CD4-positive, alpha-beta T cell (primary cell): ENCODE measurements at regions of chr17 and their contacts with region 1.

Region 1: DNA sequence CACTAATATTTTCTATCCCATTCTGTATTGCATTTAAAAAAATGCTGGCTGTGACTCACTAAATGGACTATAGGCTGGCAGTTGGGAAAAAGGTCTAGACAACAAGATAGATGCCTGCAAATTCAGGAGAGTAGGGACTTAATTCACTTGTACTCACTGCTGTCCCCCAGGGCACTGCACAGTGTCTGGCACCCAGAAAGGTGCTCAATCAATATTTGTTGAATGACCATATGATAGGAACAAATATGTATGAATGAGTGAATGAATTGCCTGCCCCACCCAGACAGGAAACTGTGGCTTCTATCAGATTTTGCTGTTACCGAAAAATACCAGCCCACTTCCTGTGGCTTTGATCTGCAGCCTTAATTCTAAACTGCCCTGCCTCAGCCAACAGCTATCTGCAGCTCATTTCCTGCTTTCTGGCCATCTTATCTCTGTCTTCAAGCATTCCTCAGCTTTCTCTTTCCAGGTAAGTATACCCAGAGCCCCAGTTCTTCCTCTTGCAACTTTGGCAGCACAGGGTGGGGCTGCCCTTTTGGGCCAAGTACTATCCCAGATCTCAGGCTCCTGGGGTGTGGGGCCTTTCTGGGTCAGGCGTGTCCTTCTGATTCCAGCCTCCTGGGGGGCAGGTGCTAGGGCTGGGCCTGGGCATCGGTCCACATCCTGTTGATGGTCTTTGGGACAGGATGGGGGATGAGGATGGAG is 15.3 kb upstream of the TNS4 start:
- DNase-seq: peak in 13 of 14 experiments; percentile 40 to 94 (median 64)
- ATAC-seq: peak; percentile 72
- H3K4me3 ChIP-seq: peak overlapping the region; percentile 51
- H3K4me3 Mint-ChIP-seq: peak overlapping the region; percentile 83
- H3K27ac ChIP-seq: no peak overlapping the region
- H3K27ac Mint-ChIP-seq: peak overlapping the region; percentile 86
- H3K4me1 ChIP-seq: peaks cover 79% of the 10 kb centered on the region
- H3K4me1 Mint-ChIP-seq: peaks cover 57% of the 10 kb centered on the region
- H3K27me3 ChIP-seq: no peaks in the 10 kb centered on the region
- H3K27me3 Mint-ChIP-seq: no peaks in the 10 kb centered on the region
- CTCF ChIP-seq: no peak

Region 2: GRCh38 chr17:40427002-40427491 is 89.7 kb before region 1 on chr17:
- CTCF ChIA-PET with region 1: no interaction called
- POLR2A ChIA-PET with region 1: interaction called, 10 read pairs
- intact Hi-C with region 1: no loop called
- DNase-seq: peak in 5 of 14 experiments; percentile 23 to 47 (median 46)
- ATAC-seq: peak; percentile 95
- H3K4me3 ChIP-seq: no peak overlapping the region
- H3K4me3 Mint-ChIP-seq: peak overlapping the region; percentile 66
- H3K27ac ChIP-seq: peak overlapping the region in 1 of 2 donors; percentile 7
- H3K27ac Mint-ChIP-seq: peak overlapping the region; percentile 51
- H3K4me1 ChIP-seq: peaks cover 33% of the 10 kb centered on the region
- H3K4me1 Mint-ChIP-seq: peaks cover 29% of the 10 kb centered on the region
- H3K27me3 ChIP-seq: no peaks in the 10 kb centered on the region
- H3K27me3 Mint-ChIP-seq: no peaks in the 10 kb centered on the region
- CTCF ChIP-seq: no peak

Region 3: DNA sequence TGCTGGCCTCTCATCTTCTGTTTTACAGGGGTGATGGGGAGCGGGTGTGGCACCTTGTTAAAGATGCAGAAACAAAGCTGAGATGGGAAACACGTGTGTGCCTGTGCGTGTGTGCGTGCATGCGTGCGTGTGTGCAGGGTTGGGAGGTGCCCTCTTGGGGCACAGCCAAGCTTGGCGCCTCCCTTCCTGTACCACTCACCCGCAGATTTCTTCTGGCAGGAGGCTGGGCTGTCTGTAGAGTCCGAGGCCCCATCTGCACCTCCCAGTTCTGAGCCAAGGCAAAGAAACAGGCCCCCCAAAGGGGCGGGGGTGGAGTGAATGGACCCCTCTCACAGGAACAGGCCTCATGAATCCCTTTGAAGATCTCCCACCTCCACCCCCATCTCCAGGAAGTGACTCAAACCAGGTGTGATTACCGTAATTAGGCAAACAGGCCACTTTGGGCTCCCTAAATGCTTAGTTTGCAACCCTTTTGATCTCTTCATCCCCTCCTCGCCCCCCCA is 36.2 kb before region 1 on chr17:
- CTCF ChIA-PET with region 1: no interaction called
- POLR2A ChIA-PET with region 1: interaction called, 21 read pairs
- intact Hi-C with region 1: loop called (anchors 1 to 2 kb)
- DNase-seq: peak; percentile 71 to 96 (median 83)
- ATAC-seq: peak; percentile 87
- H3K4me3 ChIP-seq: no peak overlapping the region
- H3K4me3 Mint-ChIP-seq: peak overlapping the region; percentile 68
- H3K27ac ChIP-seq: peak overlapping the region; percentile 57 to 71
- H3K27ac Mint-ChIP-seq: peak overlapping the region; percentile 97
- H3K4me1 ChIP-seq: peaks cover 80% of the 10 kb centered on the region
- H3K4me1 Mint-ChIP-seq: peaks cover 67% of the 10 kb centered on the region
- H3K27me3 ChIP-seq: no peaks in the 10 kb centered on the region
- H3K27me3 Mint-ChIP-seq: no peaks in the 10 kb centered on the region
- CTCF ChIP-seq: no peak

Region 4: DNA sequence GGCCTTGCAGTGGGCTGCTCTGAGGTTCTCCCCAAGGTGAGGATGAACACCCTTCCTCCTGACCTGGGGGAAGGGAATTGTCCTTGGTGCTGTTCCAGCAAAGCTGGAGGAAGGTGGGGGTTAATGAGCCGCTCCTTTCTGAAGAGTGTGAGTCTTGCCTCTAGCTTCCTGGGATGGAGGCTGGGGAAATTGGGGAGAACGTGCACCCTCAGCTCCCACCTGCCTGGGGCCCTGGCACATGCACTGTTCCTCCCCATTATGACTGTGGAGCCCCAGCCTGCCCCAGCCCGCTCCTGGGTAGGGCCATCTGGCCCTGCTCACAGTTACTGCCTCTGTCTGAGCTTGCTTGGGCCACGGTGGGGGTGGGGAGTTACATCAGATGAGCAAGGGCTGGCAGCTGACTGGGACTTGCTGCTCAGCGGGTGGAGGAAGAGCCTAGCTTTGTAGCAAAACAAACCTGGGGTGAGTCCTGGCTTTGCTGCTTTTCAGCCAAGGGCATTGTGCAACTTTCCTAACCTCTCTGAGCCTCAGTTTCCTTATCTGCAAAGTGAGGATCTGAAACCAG is 26.4 kb before region 1 on chr17:
- CTCF ChIA-PET with region 1: no interaction called
- POLR2A ChIA-PET with region 1: interaction called, 10 read pairs
- intact Hi-C with region 1: loop called in 1 of 2 experiments (anchors 2 kb)
- DNase-seq: peak in 4 of 14 experiments; percentile 11 to 48 (median 26)
- ATAC-seq: no peak
- H3K4me3 ChIP-seq: no peak overlapping the region
- H3K4me3 Mint-ChIP-seq: peak overlapping the region; percentile 48
- H3K27ac ChIP-seq: no peak overlapping the region
- H3K27ac Mint-ChIP-seq: peak overlapping the region; percentile 49
- H3K4me1 ChIP-seq: peaks cover 47% of the 10 kb centered on the region
- H3K4me1 Mint-ChIP-seq: peaks cover 62% of the 10 kb centered on the region
- H3K27me3 ChIP-seq: no peaks in the 10 kb centered on the region
- H3K27me3 Mint-ChIP-seq: no peaks in the 10 kb centered on the region
- CTCF ChIP-seq: no peak

Region 5: DNA sequence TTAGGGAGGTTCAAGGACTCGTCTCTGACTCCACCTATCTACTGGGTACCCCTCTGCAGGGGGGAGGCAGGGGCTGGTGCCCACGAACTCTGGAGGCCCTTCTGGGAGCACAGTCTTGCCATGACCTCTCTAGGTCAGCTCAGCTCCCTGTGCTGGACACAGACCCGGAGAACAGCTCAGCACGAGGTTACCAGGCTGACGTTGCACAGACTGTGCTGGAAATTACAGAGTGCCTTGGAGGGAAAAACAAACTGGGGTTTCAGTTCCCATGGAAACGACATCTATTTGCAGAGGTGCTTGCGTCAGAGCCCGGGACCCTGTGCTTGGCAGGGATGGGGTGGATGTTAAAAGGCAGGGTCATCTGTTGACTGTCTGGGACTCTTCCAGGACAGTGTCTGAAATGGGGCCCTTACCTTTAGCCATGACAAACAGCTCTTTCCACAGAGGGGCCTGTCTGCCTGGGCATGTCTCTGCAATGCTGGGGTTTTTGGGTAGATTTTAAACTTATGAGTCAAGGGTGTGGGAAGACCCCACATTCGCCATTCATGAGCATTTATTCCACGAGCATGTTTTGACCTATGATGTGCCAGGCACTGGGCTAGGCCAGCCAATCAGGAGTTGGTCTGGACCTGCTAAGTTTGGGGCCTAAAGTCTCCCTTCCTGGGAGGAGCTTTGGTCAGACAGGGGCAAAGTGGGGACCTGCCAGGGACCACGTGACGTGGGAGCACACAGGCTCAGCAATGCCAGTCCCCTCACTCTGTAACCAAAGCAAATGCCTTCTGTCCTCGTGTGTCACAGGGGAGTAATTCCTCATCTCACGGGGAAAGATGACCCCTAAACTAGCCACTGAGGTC is 26.1 kb after region 1 on chr17:
- CTCF ChIA-PET with region 1: interaction called, 3 read pairs
- POLR2A ChIA-PET with region 1: interaction called, 14 read pairs
- intact Hi-C with region 1: no loop called
- DNase-seq: peak in 5 of 14 experiments; percentile 32 to 80 (median 45)
- ATAC-seq: no peak
- H3K4me3 ChIP-seq: no peak overlapping the region
- H3K4me3 Mint-ChIP-seq: peak overlapping the region; percentile 72
- H3K27ac ChIP-seq: peak overlapping the region in 1 of 2 donors; percentile 79
- H3K27ac Mint-ChIP-seq: peak overlapping the region; percentile 94
- H3K4me1 ChIP-seq: peaks cover 94% of the 10 kb centered on the region
- H3K4me1 Mint-ChIP-seq: peaks cover 83% of the 10 kb centered on the region
- H3K27me3 ChIP-seq: no peaks in the 10 kb centered on the region
- H3K27me3 Mint-ChIP-seq: no peaks in the 10 kb centered on the region
- CTCF ChIP-seq: no peak